ENCODE measurements at regions of chr3 and their contacts with region 1.

Region 1: GRCh38 chr3:13419505-13420044 is 547 bp downstream of the NUP210 start:
- DNase-seq: peak; percentile 58 to 69 (median 64)
- ATAC-seq: peak; percentile 74
- H3K4me3 ChIP-seq: peak overlapping the region; percentile 70
- H3K4me3 Mint-ChIP-seq: peak overlapping the region; percentile 77 to 100 (median 90)
- H3K27ac ChIP-seq: peak overlapping the region; percentile 96
- H3K27ac Mint-ChIP-seq: peak overlapping the region; percentile 83 to 97 (median 92)
- H3K4me1 ChIP-seq: peaks cover 55 to 60% of the 10 kb centered on the region in 2 donors
- H3K4me1 Mint-ChIP-seq: peaks cover 41 to 81% (median 69%) of the 10 kb centered on the region in 7 donors
- H3K27me3 ChIP-seq: no peaks in the 10 kb centered on the region
- H3K27me3 Mint-ChIP-seq: no peaks in the 10 kb centered on the region

Region 2: GRCh38 chr3:13073326-13074005 is 346.1 kb before region 1 on chr3 and contains the start of gene IQSEC1:
- CTCF ChIA-PET with region 1: no interaction called
- POLR2A ChIA-PET with region 1: no interaction called
- intact Hi-C with region 1: loop called in 1 of 2 experiments (anchors 2 kb)
- DNase-seq: peak; percentile 15 to 70 (median 51)
- ATAC-seq: peak; percentile 80
- H3K4me3 ChIP-seq: peak within 1 kb of the TSS; percentile 53
- H3K4me3 Mint-ChIP-seq: peak within 1 kb of the TSS; percentile 59 to 86 (median 77)
- H3K27ac ChIP-seq: no peak within 1 kb of the TSS
- H3K27ac Mint-ChIP-seq: peak within 1 kb of the TSS in 6 of 9 donors; percentile 36 to 77 (median 60)
- H3K4me1 ChIP-seq: peaks cover 28 to 35% of the 10 kb centered on the region in 2 donors
- H3K4me1 Mint-ChIP-seq: peaks cover 18 to 46% (median 39%) of the 10 kb centered on the region in 7 donors
- H3K27me3 ChIP-seq: peaks cover 0 to 3% of the 10 kb centered on the region in 2 donors
- H3K27me3 Mint-ChIP-seq: peaks cover 8 to 45% (median 12%) of the 10 kb centered on the region in 5 donors
- total RNA-seq, gene IQSEC1: 51.8 to 163 (median 79.5) TPM

Region 3: DNA sequence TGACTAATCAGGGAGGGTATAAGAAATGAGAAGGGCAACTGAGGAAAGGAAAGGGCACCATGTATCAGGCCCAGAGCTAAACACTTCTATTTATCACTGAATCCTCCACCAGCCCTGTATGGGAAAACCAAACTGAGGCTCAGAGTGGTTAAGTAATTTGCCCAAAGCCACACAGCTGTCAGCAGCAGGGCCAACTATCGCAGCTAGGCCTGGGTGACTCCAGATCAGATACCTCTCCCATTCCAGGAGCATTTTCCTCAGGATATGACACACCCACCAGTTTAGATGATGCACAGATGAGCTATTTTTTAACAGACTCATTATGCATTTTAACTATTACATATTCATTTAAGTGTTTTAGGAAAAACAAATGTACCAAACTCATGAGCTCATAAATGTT is 14.0 kb before region 1 on chr3:
- CTCF ChIA-PET with region 1: interaction called, 4 read pairs
- POLR2A ChIA-PET with region 1: interaction called, 5 read pairs
- intact Hi-C with region 1: loop called in 1 of 2 experiments (anchors 2 kb)
- DNase-seq: no peak
- ATAC-seq: no peak
- H3K4me3 ChIP-seq: no peak overlapping the region
- H3K4me3 Mint-ChIP-seq: no peak overlapping the region
- H3K27ac ChIP-seq: peak overlapping the region; percentile 37
- H3K27ac Mint-ChIP-seq: peak overlapping the region in 8 of 9 donors; percentile 20 to 80 (median 68)
- H3K4me1 ChIP-seq: peaks cover 0 to 8% of the 10 kb centered on the region in 2 donors
- H3K4me1 Mint-ChIP-seq: peaks cover 29 to 70% (median 53%) of the 10 kb centered on the region in 7 donors
- H3K27me3 ChIP-seq: no peaks in the 10 kb centered on the region
- H3K27me3 Mint-ChIP-seq: no peaks in the 10 kb centered on the region

Region 4: DNA sequence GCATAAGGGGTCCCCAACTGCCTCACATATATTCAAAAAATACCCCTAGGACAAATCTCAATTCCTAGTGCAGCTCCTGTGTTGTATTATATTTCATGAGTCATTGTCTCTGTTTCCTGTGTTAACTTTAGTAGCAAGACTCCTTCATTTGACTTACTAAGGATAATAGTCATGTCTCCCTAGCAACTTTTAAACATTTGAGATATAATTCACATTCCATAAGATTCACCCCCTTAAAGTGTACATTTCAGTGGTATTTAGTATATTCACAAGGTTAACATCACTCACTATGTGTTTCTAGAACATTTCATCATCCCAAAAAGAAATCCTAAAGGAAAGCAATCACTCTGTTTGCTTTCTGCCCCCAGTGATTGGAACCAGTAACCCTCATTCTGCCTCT is 581.6 kb after region 1 on chr3:
- CTCF ChIA-PET with region 1: no interaction called
- POLR2A ChIA-PET with region 1: no interaction called
- intact Hi-C with region 1: no loop called
- DNase-seq: no peak
- ATAC-seq: no peak
- H3K4me3 ChIP-seq: no peak overlapping the region
- H3K4me3 Mint-ChIP-seq: no peak overlapping the region
- H3K27ac ChIP-seq: no peak overlapping the region
- H3K27ac Mint-ChIP-seq: no peak overlapping the region
- H3K4me1 ChIP-seq: no peaks in the 10 kb centered on the region
- H3K4me1 Mint-ChIP-seq: no peaks in the 10 kb centered on the region
- H3K27me3 ChIP-seq: no peaks in the 10 kb centered on the region
- H3K27me3 Mint-ChIP-seq: peaks cover 0 to 29% (median 16%) of the 10 kb centered on the region in 5 donors